ENCODE measurements at regions of chr11 and their contacts with region 1.

Region 1: GRCh38 chr11:124758317-124759203 is 3.5 kb downstream of the ESAM start:
- DNase-seq: peak; percentile 41 to 84 (median 62)
- ATAC-seq: peak; percentile 80
- H3K4me3 ChIP-seq: peak overlapping the region; percentile 13
- H3K4me3 Mint-ChIP-seq: peak overlapping the region; percentile 59
- H3K27ac ChIP-seq: no peak overlapping the region
- H3K27ac Mint-ChIP-seq: no peak overlapping the region
- H3K4me1 ChIP-seq: peaks cover 53% of the 10 kb centered on the region
- H3K4me1 Mint-ChIP-seq: peaks cover 36% of the 10 kb centered on the region
- H3K27me3 ChIP-seq: peaks cover 55 to 60% of the 10 kb centered on the region in 2 experiments
- H3K27me3 Mint-ChIP-seq: peaks cover 76% of the 10 kb centered on the region
- CTCF ChIP-seq: peak; percentile 78

Region 2: GRCh38 chr11:124644426-124645280 is 113.9 kb before region 1 on chr11:
- CTCF ChIA-PET with region 1: interaction called, 4 read pairs
- POLR2A ChIA-PET with region 1: no interaction called
- intact Hi-C with region 1: loop called in 1 of 2 experiments (anchors 1 kb)
- DNase-seq: peak in 8 of 14 experiments; percentile 2 to 71 (median 28)
- ATAC-seq: peak; percentile 77
- H3K4me3 ChIP-seq: no peak overlapping the region
- H3K4me3 Mint-ChIP-seq: no peak overlapping the region
- H3K27ac ChIP-seq: no peak overlapping the region
- H3K27ac Mint-ChIP-seq: no peak overlapping the region
- H3K4me1 ChIP-seq: peaks cover 3% of the 10 kb centered on the region
- H3K4me1 Mint-ChIP-seq: no peaks in the 10 kb centered on the region
- H3K27me3 ChIP-seq: no peaks in the 10 kb centered on the region
- H3K27me3 Mint-ChIP-seq: no peaks in the 10 kb centered on the region
- CTCF ChIP-seq: peak; percentile 95

Region 3: GRCh38 chr11:124746621-124747243 is 11.8 kb before region 1 on chr11:
- CTCF ChIA-PET with region 1: interaction called, 60 read pairs
- POLR2A ChIA-PET with region 1: interaction called, 65 read pairs
- intact Hi-C with region 1: loop called (anchors 1 kb)
- DNase-seq: peak; percentile 71 to 90 (median 76)
- ATAC-seq: peak; percentile 90
- H3K4me3 ChIP-seq: peak overlapping the region; percentile 95
- H3K4me3 Mint-ChIP-seq: peak overlapping the region; percentile 94
- H3K27ac ChIP-seq: peak overlapping the region; percentile 72 to 75
- H3K27ac Mint-ChIP-seq: peak overlapping the region; percentile 82
- H3K4me1 ChIP-seq: peaks cover 32% of the 10 kb centered on the region
- H3K4me1 Mint-ChIP-seq: peaks cover 5% of the 10 kb centered on the region
- H3K27me3 ChIP-seq: peaks cover 0 to 1% of the 10 kb centered on the region in 2 experiments
- H3K27me3 Mint-ChIP-seq: no peaks in the 10 kb centered on the region
- CTCF ChIP-seq: peak; percentile 67

Region 4: GRCh38 chr11:124793466-124794278 is 35.1 kb after region 1 on chr11:
- CTCF ChIA-PET with region 1: interaction called, 31 read pairs
- POLR2A ChIA-PET with region 1: interaction called, 3 read pairs
- intact Hi-C with region 1: no loop called
- DNase-seq: peak in 4 of 14 experiments; percentile 35 to 71 (median 62)
- ATAC-seq: no peak
- H3K4me3 ChIP-seq: no peak overlapping the region
- H3K4me3 Mint-ChIP-seq: no peak overlapping the region
- H3K27ac ChIP-seq: no peak overlapping the region
- H3K27ac Mint-ChIP-seq: no peak overlapping the region
- H3K4me1 ChIP-seq: peaks cover 3% of the 10 kb centered on the region
- H3K4me1 Mint-ChIP-seq: peaks cover 46% of the 10 kb centered on the region
- H3K27me3 ChIP-seq: no peaks in the 10 kb centered on the region
- H3K27me3 Mint-ChIP-seq: no peaks in the 10 kb centered on the region
- CTCF ChIP-seq: peak; percentile 84

Measured in CD4-positive, alpha-beta T cell (primary cell).